GM12878 (cell line): ENCODE measurements at regions of chr5 and their contacts with region 1.

Region 1: GRCh38 chr5:72280581-72281170 is 39.4 kb downstream of the MRPS27 start:
- DNase-seq: no peak
- ATAC-seq: peak; percentile 57; the same call in 2 of the 3 replicates
- H3K4me3 ChIP-seq: no peak overlapping the region
- H3K27ac ChIP-seq: no peak overlapping the region
- H3K4me1 ChIP-seq: no peaks in the 10 kb centered on the region; the same call in 1 of the 2 replicates
- H3K27me3 ChIP-seq: no peaks in the 10 kb centered on the region
- CTCF ChIP-seq: peak; percentile 17 to 42 (median 37); a peak in 4 of 6 replicates
- EP300 ChIP-seq: no peak
- POLR2A ChIP-seq: no peak
- RAD21 ChIP-seq: peak; percentile 29; the same call in 1 of the 2 replicates

Region 2: GRCh38 chr5:71740015-71740753 is 540.5 kb before region 1 on chr5:
- CTCF ChIA-PET with region 1: no interaction called
- POLR2A ChIA-PET with region 1: no interaction called
- RAD21 ChIA-PET with region 1: no interaction called
- SMC1A ChIA-PET with region 1: no interaction called
- in situ Hi-C with region 1: no loop called
- intact Hi-C with region 1: no loop called
- DNase-seq: peak; percentile 54
- ATAC-seq: peak; percentile 97
- H3K4me3 ChIP-seq: no peak overlapping the region
- H3K27ac ChIP-seq: no peak overlapping the region
- H3K4me1 ChIP-seq: peaks cover 18% of the 10 kb centered on the region
- H3K27me3 ChIP-seq: no peaks in the 10 kb centered on the region
- CTCF ChIP-seq: no peak
- EP300 ChIP-seq: no peak; a peak in 1 of 4 replicates
- POLR2A ChIP-seq: no peak
- RAD21 ChIP-seq: no peak

Region 3: GRCh38 chr5:72296256-72296655 is 15.6 kb after region 1 on chr5:
- CTCF ChIA-PET with region 1: interaction called, 3 read pairs
- POLR2A ChIA-PET with region 1: interaction called, 8 read pairs
- RAD21 ChIA-PET with region 1: interaction called, 5 read pairs
- SMC1A ChIA-PET with region 1: interaction called, 10 read pairs
- in situ Hi-C with region 1: no loop called
- intact Hi-C with region 1: no loop called
- DNase-seq: no peak
- ATAC-seq: no peak
- H3K4me3 ChIP-seq: peak overlapping the region; percentile 8; the same call in 1 of the 2 replicates
- H3K27ac ChIP-seq: peak overlapping the region; percentile 60
- H3K4me1 ChIP-seq: peaks cover 48% of the 10 kb centered on the region
- H3K27me3 ChIP-seq: no peaks in the 10 kb centered on the region
- CTCF ChIP-seq: no peak
- EP300 ChIP-seq: no peak
- POLR2A ChIP-seq: no peak
- RAD21 ChIP-seq: no peak